HCT116 (cell line): ENCODE measurements at regions of chr7 and their contacts with region 1.

Region 1: GRCh38 chr7:113705439-113705838 is 213.4 kb downstream of the PPP1R3A start:
- DNase-seq: no peak
- ATAC-seq: no peak
- H3K4me3 ChIP-seq: no peak overlapping the region
- H3K27ac ChIP-seq: no peak overlapping the region
- H3K4me1 ChIP-seq: no peaks in the 10 kb centered on the region
- H3K27me3 ChIP-seq: no peaks in the 10 kb centered on the region
- CTCF ChIP-seq: no peak
- POLR2A ChIP-seq: no peak
- RAD21 ChIP-seq: no peak

Region 2: GRCh38 chr7:113159746-113160339 is 545.6 kb before region 1 on chr7:
- CTCF ChIA-PET with region 1: interaction called, 6 read pairs
- POLR2A ChIA-PET with region 1: no interaction called
- RAD21 ChIA-PET with region 1: no interaction called
- intact Hi-C with region 1: loop called (anchors 10 kb)
- DNase-seq: peak; percentile 39
- ATAC-seq: peak; percentile 93
- H3K4me3 ChIP-seq: no peak overlapping the region
- H3K27ac ChIP-seq: no peak overlapping the region
- H3K4me1 ChIP-seq: no peaks in the 10 kb centered on the region
- H3K27me3 ChIP-seq: no peaks in the 10 kb centered on the region
- CTCF ChIP-seq: peak; percentile 60 to 78 (median 75); a peak in 5 of 6 replicates
- POLR2A ChIP-seq: no peak
- RAD21 ChIP-seq: peak; percentile 75